Activated B cell treated with CpG ODN at 0.5 μM for 24 hours (primary cell): ENCODE measurements at regions of chr20 and their contacts with region 1.

Region 1: DNA sequence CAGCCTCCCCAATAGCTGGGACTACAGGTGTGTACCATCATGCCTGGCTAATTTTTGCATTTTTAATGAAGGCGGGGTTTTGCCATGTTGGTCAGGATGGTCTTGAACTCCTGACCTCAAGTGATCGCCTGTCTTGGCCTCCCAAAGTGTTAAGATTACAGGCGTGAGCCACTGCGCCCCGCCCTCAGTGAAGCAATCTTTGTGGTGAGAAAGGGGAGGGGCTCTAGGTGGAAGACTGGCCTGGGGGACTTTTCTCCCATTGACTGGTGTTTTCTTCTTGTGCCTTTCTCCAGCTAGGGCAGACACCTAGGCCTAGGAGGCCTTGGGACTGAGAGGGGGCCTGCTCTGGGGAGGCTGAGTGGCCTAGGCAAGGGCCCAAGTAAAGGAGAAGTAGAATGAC is 84.1 kb downstream of the DNAAF9 start:
- DNase-seq: no peak
- ATAC-seq: no peak
- H3K4me3 Mint-ChIP-seq: no peak overlapping the region
- H3K27ac Mint-ChIP-seq: no peak overlapping the region
- H3K4me1 Mint-ChIP-seq: no peaks in the 10 kb centered on the region
- H3K27me3 Mint-ChIP-seq: no peaks in the 10 kb centered on the region
- CTCF ChIP-seq: no peak

Region 2: DNA sequence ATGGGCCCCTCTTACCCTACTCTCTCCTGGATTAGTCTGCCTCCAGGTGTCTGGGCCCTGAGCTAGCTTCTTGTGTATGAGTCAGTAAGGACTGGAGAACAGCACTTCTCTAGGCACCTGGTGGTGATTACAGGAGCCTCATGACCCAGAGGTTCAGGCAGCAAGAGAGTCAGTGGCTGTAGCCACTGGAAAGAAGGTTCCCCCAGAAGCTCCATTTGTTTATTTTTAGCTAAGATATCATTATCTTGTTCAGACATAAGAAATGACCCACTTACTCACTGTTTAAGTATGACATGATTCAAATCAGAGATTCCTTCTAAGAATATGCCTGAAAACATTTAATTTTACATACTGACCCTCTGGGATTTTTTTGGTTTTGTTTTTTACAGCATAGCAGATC is 60.8 kb before region 1 on chr20:
- CTCF ChIA-PET with region 1: no interaction called
- POLR2A ChIA-PET with region 1: interaction called, 15 read pairs
- intact Hi-C with region 1: no loop called
- DNase-seq: no peak
- ATAC-seq: no peak
- H3K4me3 Mint-ChIP-seq: no peak overlapping the region
- H3K27ac Mint-ChIP-seq: no peak overlapping the region
- H3K4me1 Mint-ChIP-seq: no peaks in the 10 kb centered on the region
- H3K27me3 Mint-ChIP-seq: no peaks in the 10 kb centered on the region
- CTCF ChIP-seq: no peak

Region 3: DNA sequence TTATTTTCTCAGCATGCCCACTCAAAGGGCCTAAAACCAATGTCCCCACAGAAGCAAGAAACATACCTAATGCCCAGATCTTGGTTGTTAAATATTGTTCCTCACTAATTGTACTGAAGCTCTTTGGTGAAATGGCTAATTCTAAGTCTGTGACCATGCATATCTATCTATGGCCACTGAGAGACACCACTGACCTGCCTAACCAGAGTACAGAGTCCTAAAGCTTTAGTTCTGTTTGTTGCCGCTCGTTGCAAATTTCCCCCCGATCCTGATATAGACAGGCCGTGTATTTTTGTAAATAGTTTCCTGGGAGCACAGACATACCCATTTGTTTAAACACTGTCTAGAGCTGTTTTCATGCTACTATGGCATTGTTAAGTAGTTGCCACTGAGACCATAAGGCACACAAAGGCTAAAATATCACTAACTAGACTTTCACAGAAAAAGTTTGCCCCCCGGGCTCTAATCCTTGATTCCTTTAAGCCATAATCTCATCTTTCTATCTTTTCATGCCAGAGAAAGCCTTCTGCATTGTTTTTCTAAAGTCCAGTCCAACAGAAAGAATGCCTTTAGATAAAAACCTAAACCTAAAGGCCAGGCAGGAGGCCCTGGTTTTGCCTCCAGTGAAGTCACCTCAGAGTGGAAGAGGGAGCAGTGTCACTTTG is 35.4 kb after region 1 on chr20:
- CTCF ChIA-PET with region 1: no interaction called
- POLR2A ChIA-PET with region 1: no interaction called
- intact Hi-C with region 1: no loop called
- DNase-seq: no peak
- ATAC-seq: no peak
- H3K4me3 Mint-ChIP-seq: no peak overlapping the region
- H3K27ac Mint-ChIP-seq: no peak overlapping the region
- H3K4me1 Mint-ChIP-seq: no peaks in the 10 kb centered on the region
- H3K27me3 Mint-ChIP-seq: no peaks in the 10 kb centered on the region
- CTCF ChIP-seq: no peak